Pancreas (tissue), 10 donors: ENCODE measurements at regions of chr10 and their contacts with region 1.

Region 1: DNA sequence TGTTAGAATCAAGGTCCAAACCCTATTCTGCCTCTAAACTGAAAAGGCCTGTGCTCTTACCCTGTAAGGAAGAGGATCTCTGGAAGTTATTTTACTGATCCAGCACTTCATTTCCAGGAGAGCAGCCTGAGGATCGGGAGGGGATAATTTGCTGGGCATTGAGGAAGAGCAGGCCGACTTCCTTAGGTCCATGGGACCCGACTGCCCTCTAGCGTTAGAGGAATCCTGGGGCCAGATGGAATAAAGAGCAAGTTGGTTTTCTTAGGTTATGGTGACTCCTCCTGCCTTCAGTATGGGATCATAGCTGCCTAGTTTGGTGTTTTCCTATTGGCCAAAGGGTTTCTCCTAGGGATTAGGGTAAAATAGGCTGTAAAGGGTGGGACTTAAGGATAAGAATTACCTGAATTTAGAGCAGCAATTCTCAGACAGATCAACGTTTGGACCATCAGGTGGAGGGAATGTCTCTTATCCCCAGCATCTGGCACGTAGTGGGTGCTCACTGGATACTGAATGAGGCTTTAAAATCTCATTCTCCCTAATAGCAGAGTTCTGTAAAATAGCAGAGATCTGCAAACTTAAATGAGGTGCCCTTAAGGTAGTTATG is 40.0 kb upstream of the SORBS1 start:
- DNase-seq: peak; percentile 61 to 88 (median 72)
- ATAC-seq: peak; percentile 95 to 100 (median 98)
- H3K4me3 ChIP-seq: no peak overlapping the region
- H3K27ac ChIP-seq: no peak overlapping the region
- H3K4me1 ChIP-seq: no peaks in the 10 kb centered on the region
- H3K27me3 ChIP-seq: no peaks in the 10 kb centered on the region
- CTCF ChIP-seq: peak; percentile 46 to 92 (median 82)

Region 2: DNA sequence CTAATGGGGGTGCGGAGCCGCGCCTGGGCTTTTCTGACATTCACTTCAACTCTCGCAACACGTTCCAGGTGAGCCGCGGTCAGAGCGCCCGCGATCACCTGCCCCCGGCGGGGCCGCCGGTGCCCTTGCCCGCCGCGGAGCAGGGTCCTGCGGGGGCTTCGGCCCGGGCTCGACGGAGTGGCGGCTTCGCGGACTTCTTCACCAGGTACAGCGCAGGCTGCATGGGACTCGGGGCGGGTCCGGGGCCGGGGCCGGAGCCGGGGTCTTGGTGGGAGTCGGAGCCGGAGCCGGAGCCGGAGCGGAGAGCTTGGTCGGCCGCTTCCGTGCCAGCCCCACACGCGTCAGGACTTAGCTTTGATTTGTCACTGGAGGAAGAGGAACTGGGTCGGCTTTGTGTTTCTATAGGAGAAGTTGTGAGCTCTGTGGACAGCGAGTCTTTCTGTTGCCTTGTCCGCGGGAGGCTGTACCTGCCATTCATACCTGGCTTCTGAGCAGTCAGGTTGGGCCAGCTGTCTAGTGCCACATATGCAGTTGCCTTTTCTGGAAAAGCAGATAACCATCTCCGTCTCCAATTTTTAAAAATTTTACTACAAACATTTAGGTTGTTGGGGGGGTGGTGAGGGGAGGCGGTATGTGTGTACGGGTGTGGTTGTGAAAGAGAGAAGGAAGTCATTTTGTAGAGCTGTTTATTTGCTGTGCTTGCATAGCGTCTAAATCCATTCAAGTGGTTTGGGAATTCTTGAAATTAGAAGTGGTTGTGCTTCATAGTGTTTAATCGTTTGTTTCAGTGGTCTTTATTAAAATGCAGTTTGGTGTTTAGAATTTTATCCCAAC is 1197.6 kb before region 1 on chr10:
- intact Hi-C with region 1: no loop called
- DNase-seq: peak; percentile 54 to 84 (median 72)
- ATAC-seq: peak; percentile 45 to 73 (median 60)
- H3K4me3 ChIP-seq: peak overlapping the region; percentile 62 to 90 (median 82)
- H3K27ac ChIP-seq: peak overlapping the region; percentile 93 to 97 (median 96)
- H3K4me1 ChIP-seq: peaks cover 9 to 17% (median 10%) of the 10 kb centered on the region in 3 donors
- H3K27me3 ChIP-seq: no peaks in the 10 kb centered on the region
- CTCF ChIP-seq: no peak

Region 3: DNA sequence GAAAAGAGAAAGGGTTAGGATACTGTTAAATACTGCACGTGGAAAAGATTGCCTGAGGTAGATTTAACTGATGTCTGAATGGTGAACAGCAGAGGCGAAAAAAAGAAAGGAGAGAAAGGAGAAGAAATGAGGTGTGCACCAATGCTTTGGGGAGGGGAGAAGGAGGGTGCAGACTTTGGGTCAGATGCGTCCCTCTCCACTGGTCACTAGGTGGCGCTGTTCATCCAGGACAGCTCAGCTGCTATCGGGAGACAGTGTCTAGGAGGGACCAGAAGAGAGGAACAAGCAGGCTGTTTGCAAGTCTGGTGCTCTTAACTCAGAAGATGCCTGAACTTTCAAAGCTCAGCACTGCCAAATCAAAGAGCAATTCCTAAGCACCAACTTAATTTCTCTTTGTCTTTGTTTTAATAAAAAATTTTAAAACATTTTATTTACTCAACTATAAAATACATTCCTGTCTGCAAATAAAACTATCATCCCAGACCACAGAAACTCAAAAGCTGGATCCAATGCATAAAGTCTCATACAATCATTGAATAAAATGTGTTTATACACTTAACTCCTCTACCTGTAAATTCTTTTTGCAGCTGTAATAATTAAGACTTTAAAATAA is 226.5 kb before region 1 on chr10:
- intact Hi-C with region 1: loop called in 2 of 3 experiments (anchors 5 to 10 kb)
- DNase-seq: peak; percentile 60 to 77 (median 74)
- ATAC-seq: peak; percentile 90 to 100 (median 96)
- H3K4me3 ChIP-seq: no peak overlapping the region
- H3K27ac ChIP-seq: no peak overlapping the region
- H3K4me1 ChIP-seq: no peaks in the 10 kb centered on the region
- H3K27me3 ChIP-seq: no peaks in the 10 kb centered on the region
- CTCF ChIP-seq: peak; percentile 83 to 92 (median 86)

Region 4: GRCh38 chr10:95430231-95430951 is 170.8 kb before region 1 on chr10:
- intact Hi-C with region 1: loop called in 2 of 3 experiments (anchors 2 to 5 kb)
- DNase-seq: peak in 4 of 6 donors; percentile 35 to 69 (median 48)
- ATAC-seq: peak; percentile 86 to 99 (median 94)
- H3K4me3 ChIP-seq: no peak overlapping the region
- H3K27ac ChIP-seq: no peak overlapping the region
- H3K4me1 ChIP-seq: peaks cover 0 to 8% (median 0%) of the 10 kb centered on the region in 3 donors
- H3K27me3 ChIP-seq: no peaks in the 10 kb centered on the region
- CTCF ChIP-seq: peak; percentile 91 to 99 (median 94)

Region 5: DNA sequence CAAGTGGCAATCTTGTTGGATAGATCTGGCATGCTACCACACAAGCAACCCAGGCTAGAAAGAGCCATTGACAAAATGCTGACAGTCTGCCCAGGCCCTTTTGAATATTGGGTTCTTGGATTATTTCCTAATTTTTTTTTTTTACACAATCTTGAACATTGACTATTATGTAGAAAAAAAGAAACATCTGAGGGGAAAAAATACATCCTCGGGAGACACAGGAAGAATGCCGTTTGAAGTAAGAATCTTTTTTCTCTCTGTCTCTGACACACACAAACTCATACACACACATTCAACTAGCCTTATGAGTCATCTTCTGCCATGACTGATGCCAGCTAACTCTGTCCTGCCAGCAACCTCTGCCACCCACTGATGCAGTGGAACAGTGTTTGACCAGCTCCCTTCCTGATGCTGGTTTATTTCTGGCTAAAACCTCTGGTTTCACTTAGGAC is 87.3 kb before region 1 on chr10:
- intact Hi-C with region 1: no loop called
- DNase-seq: peak in 4 of 6 donors; percentile 55 to 70 (median 68)
- ATAC-seq: peak; percentile 73 to 85 (median 81)
- H3K4me3 ChIP-seq: no peak overlapping the region
- H3K27ac ChIP-seq: peak overlapping the region; percentile 64 to 75 (median 70)
- H3K4me1 ChIP-seq: peaks cover 38 to 54% (median 51%) of the 10 kb centered on the region in 3 donors
- H3K27me3 ChIP-seq: no peaks in the 10 kb centered on the region
- CTCF ChIP-seq: no peak

Region 6: GRCh38 chr10:95525033-95525418 is 76.2 kb before region 1 on chr10:
- intact Hi-C with region 1: loop called in 1 of 3 experiments (anchors 10 kb)
- DNase-seq: no peak
- ATAC-seq: no peak
- H3K4me3 ChIP-seq: no peak overlapping the region
- H3K27ac ChIP-seq: no peak overlapping the region
- H3K4me1 ChIP-seq: peaks cover 0 to 6% (median 0%) of the 10 kb centered on the region in 3 donors
- H3K27me3 ChIP-seq: no peaks in the 10 kb centered on the region
- CTCF ChIP-seq: no peak